Ascending aorta (tissue), 2 donors: ENCODE measurements at regions of chr4 and their contacts with region 1.

Region 1: DNA sequence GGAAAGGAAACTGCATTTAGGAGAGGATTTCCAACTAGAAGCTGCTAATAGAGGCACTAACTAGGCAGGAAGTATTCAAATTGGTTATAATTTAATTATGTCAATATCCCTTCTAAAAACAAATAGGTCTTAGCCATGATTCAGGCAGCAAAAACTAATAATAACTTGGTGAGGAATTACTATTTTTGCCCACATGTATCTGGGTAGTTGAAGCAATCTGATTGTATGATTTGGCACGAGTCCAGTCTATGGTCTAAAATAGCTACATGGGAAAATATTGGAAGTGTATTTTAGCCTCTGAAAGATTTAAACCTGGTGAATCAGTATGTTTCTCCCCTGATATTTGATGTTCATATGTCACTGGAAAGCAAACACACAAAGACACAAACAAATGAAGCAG is 62.2 kb downstream of the MFAP3L start:
- DNase-seq: no peak
- H3K4me3 ChIP-seq: no peak overlapping the region
- H3K27ac ChIP-seq: peak overlapping the region; percentile 62 to 72
- H3K4me1 ChIP-seq: peaks cover 3 to 17% of the 10 kb centered on the region in 2 donors
- H3K27me3 ChIP-seq: no peaks in the 10 kb centered on the region
- CTCF ChIP-seq: no peak

Region 2: DNA sequence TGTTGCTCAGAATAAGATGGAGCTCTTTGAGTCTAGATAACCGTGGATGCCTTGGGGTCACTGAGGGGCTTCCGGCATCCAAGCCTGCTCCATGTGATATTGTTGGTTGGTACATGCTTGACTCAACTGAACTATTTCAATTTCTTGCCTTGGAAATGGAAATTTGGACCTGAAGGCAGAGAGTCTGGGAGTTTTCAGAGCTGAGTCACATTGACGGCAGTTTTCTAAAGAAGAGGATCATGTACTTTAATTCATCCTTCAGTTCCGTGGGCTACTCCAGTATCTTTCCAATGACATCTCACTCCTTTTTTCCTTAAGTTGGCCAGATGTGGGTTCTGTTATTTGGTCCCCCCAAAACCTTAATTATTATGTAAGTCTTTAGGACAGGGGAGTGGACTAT is 38.3 kb before region 1 on chr4:
- intact Hi-C with region 1: loop called (anchors 5 kb)
- DNase-seq: no peak
- H3K4me3 ChIP-seq: no peak overlapping the region
- H3K27ac ChIP-seq: no peak overlapping the region
- H3K4me1 ChIP-seq: no peaks in the 10 kb centered on the region
- H3K27me3 ChIP-seq: no peaks in the 10 kb centered on the region
- CTCF ChIP-seq: no peak

Region 3: GRCh38 chr4:170004651-170005295 is 40.8 kb after region 1 on chr4:
- intact Hi-C with region 1: loop called (anchors 1 kb)
- DNase-seq: no peak
- H3K4me3 ChIP-seq: no peak overlapping the region
- H3K27ac ChIP-seq: peak overlapping the region; percentile 4 to 52
- H3K4me1 ChIP-seq: peaks cover 0 to 21% of the 10 kb centered on the region in 2 donors
- H3K27me3 ChIP-seq: no peaks in the 10 kb centered on the region
- CTCF ChIP-seq: no peak